Right ventricle myocardium superior (tissue), 1 donor: ENCODE measurements at regions of chr5 and their contacts with region 1.

Region 1: GRCh38 chr5:65925601-65926275 is 637 bp upstream of the ERBIN start:
- DNase-seq: peak; percentile 91
- ATAC-seq: peak; percentile 91

Region 2: DNA sequence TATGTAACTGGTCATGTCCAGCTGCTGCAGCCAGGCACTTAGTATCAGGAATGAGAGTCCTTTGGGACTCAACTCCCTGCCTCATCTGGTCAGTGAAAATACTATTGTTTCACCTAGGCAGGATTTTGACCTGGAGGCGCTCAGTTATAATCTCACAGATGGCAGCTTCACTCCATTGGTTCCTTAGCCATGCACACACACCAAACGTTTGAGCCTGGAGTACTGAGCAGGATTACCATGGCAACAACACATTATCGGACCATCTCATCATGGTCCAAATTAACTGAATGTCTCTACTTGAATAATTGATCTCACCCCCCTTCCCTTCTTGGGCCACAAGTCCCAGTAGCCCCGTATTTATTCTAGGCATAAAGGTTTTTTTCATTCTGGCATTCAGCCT is 203.4 kb after region 1 on chr5:
- intact Hi-C with region 1: no loop called
- DNase-seq: no peak
- ATAC-seq: no peak

Region 3: GRCh38 chr5:66144074-66144833 is 218.5 kb after region 1 on chr5 and contains the start of gene SREK1:
- intact Hi-C with region 1: loop called (anchors 10 kb)
- DNase-seq: peak; percentile 96
- ATAC-seq: peak; percentile 97
- total RNA-seq, gene SREK1: 27.0 TPM

Region 4: GRCh38 chr5:66498791-66499207 is 573.1 kb after region 1 on chr5:
- intact Hi-C with region 1: no loop called
- DNase-seq: no peak
- ATAC-seq: peak; percentile 92